Head of caudate nucleus (tissue), 42 donors: ENCODE measurements at regions of chr1 and their contacts with region 1.

Region 1: DNA sequence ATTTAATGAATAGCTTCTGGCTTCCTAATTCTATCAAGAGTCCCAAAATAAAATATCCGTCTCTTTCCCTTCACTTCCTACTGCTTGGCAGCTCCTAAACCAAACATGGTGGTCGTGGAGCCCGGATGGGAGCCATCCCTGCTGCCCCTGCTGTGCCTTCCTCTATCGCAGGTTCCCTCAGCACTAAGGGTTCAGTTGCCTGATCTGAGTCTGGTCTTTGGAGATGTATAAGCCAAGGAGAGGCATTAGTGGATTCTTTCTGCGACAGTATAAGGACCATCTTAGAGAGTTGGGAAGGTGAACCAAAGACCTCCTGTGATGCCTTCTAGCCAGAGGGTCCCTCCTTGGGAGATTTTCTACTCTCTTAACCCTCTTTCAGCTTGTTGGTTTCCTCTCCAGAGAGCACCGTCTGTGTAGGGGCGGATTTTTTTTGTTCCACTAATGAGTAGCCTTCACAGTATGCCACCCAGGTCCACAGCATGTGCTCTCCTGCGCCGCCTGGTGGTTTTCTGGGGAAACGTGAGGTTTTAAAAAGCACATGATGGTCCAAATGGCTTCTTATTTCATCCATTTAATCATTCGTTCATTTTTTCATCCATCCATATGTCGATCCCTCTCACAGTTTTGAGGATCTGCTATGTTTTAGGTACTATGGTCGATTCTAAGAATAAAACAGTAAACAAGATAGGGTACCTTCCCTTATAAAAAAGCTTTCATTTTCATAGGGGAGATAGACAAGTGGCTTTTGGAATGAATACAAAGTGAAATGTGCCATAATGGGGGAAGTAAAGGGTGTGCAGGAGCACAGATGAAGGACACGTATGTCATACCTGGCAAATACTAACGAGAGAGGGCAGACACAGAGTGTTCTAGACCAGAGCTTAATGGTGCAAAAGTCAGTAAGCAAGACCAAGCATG is 71.0 kb downstream of the NFASC start:
- DNase-seq: peak; percentile 43 to 93 (median 78)

Region 2: GRCh38 chr1:204763706-204764427 is 177.8 kb before region 1 on chr1:
- intact Hi-C with region 1: no loop called
- DNase-seq: peak; percentile 52 to 93 (median 80)

Region 3: GRCh38 chr1:204806943-204807687 is 134.6 kb before region 1 on chr1:
- intact Hi-C with region 1: loop called (anchors 5 kb)
- DNase-seq: peak; percentile 78 to 95 (median 88)

Region 4: DNA sequence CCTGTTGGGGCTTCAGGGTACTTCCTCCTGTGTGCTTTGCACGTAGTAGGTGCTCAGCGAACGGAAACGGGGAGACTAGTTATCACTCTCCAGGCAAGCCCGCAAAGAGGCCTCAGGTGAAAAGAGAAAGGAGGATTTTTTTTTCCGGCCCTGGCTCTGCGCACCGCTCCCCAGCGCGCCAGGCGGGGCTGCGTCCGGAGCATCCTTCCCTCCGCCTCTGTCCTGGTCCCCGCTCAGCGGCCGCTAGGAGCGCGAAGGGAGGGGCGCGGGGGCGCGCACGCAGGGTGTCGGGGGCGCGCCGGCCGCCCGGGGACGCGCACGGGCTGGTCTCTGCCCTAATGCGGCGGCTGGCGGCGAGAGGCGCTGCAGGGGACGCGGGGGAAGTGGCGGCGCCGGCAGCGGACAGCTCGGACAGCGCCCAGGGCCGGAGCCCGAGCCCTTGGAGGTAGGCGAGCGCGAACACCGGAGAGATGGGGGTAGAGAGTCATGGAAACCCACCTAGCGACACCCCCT is 113.3 kb before region 1 on chr1:
- intact Hi-C with region 1: loop called (anchors 5 kb)
- DNase-seq: peak; percentile 60 to 94 (median 88)

Region 5: GRCh38 chr1:204872262-204872881 is 69.3 kb before region 1 on chr1:
- intact Hi-C with region 1: loop called (anchors 10 kb)
- DNase-seq: peak in 3 of 42 donors; percentile 6 to 38 (median 30)